Adrenal gland (tissue), 19 donors: ENCODE measurements at regions of chr10 and their contacts with region 1.

Region 1: GRCh38 chr10:77641788-77642397 is 4.3 kb upstream of the KCNMA1 start:
- DNase-seq: peak; percentile 61 to 89 (median 77)
- H3K4me3 ChIP-seq: no peak overlapping the region
- H3K27ac ChIP-seq: no peak overlapping the region
- H3K4me1 ChIP-seq: peaks cover 0 to 4% of the 10 kb centered on the region in 2 donors
- H3K27me3 ChIP-seq: peaks cover 21% of the 10 kb centered on the region
- CTCF ChIP-seq: peak; percentile 82 to 94 (median 88)
- POLR2A ChIP-seq: no peak

Region 2: DNA sequence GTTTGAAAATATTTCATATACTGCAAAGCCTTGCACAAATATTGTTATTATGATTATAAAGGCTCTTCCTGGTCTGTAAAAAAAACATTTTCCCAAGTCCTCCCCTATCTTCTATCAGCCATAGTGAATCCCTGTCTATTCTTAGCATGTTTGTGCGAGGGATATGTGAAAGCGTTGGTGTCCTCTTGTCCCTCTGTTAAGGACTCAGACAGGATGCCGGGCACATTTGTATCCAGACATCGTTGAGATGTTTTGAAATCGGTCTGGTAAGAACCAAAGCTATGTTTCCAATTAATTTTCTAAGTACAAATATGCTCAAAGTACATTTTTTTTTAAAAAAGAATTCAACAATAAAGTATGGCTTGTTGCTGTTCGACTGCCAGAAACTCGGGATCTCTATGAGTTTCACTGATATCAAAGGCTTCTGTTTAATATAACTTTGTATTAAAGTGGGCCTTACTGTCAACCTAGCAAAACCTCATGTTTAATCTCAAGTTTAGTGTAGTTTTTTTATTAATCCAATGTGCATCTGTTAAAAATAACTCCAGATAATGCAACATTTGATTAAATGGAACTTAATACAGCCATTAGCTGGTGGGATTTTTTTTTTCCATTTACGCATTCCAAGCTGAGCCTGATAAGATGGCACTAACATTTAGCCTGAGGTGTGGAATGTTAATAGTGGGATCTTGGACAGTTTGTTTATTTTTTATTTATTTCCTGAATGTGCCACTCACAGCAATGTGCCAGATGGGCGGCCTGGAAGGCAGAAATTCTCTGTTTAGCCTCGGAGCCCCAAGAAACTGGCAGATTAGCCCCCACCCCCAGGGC is 1456.2 kb before region 1 on chr10:
- intact Hi-C with region 1: no loop called
- DNase-seq: no peak
- H3K4me3 ChIP-seq: no peak overlapping the region
- H3K27ac ChIP-seq: no peak overlapping the region
- H3K4me1 ChIP-seq: peaks cover 0 to 3% of the 10 kb centered on the region in 2 donors
- H3K27me3 ChIP-seq: no peaks in the 10 kb centered on the region
- CTCF ChIP-seq: no peak
- POLR2A ChIP-seq: no peak

Region 3: DNA sequence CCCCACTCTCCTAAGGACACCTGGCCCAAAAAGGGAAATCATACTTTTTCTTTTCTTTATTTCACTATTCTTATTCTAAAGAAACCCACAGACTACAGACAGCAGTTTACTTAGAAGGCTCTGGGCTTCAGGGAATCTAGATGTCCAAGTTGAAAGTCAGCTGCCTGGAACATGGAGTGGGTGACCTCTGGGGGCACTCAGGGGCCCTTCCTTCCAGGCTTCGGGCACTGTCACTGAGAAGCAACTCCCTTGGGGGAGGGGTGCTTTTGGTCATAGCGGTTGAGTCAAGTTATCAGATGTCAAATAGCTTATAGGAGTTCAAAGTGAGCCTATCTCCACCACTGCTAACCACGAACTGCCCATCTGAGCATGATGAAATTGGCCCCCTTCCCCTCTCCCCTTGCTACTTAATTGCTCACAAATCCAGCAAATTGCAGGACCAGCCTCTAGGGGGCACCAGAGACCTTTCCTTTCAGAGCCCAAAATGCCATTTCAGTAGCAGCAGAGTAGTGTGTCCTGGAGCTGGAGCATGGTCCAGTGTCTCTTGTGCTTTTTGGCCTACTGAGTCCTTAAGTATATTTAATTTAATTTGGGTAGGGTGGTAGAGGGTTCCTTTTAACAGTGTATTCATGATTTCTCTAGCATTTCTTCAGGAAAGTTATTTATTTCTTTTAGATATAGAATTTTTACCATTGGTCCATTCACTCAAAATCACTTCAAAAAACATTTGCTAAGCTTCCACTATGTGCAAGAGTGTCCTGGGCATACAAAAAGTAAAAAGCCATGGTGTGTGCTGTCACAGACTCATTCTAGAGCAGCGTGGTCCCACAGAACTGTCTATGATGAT is 468.1 kb before region 1 on chr10:
- intact Hi-C with region 1: loop called (anchors 2 to 5 kb)
- DNase-seq: peak; percentile 55 to 93 (median 77)
- H3K4me3 ChIP-seq: no peak overlapping the region
- H3K27ac ChIP-seq: no peak overlapping the region
- H3K4me1 ChIP-seq: no peaks in the 10 kb centered on the region
- H3K27me3 ChIP-seq: no peaks in the 10 kb centered on the region
- CTCF ChIP-seq: peak; percentile 85 to 92 (median 91)
- POLR2A ChIP-seq: no peak

Region 4: DNA sequence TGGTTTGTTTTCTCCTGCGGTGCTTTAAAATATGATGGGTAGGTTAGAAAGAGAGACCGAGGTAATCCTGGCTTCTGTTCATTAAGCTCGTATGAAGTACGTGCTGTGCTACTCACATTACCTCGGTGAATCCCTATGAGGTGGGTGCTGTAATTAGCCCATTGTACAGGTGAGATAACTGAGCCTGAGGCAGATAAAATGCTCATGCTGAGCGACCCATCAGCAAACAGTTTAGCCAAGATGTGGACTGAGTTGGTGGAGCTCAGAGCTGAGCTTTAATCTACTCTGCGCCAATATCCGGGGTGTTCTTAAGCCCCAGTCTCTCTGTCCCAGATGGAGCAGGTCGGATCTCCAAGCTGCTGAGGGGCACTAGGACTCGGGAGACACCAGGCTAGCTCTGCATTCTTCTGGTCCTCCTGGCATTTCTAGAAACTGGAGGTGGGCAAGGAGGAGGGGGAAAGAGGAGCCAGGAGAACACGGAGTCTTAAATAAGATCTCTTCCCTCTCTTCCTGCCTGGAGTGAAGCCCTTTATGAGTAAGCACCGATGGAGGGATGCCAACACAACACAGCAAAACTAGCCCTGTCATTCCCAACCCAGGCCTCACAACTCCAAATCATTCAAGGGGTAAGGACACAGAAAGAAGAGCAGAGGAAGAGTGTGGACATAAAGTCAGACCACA is 462.7 kb before region 1 on chr10:
- intact Hi-C with region 1: loop called (anchors 2 to 5 kb)
- DNase-seq: peak; percentile 63 to 80 (median 77)
- H3K4me3 ChIP-seq: no peak overlapping the region
- H3K27ac ChIP-seq: no peak overlapping the region
- H3K4me1 ChIP-seq: no peaks in the 10 kb centered on the region
- H3K27me3 ChIP-seq: no peaks in the 10 kb centered on the region
- CTCF ChIP-seq: no peak
- POLR2A ChIP-seq: no peak

Region 5: DNA sequence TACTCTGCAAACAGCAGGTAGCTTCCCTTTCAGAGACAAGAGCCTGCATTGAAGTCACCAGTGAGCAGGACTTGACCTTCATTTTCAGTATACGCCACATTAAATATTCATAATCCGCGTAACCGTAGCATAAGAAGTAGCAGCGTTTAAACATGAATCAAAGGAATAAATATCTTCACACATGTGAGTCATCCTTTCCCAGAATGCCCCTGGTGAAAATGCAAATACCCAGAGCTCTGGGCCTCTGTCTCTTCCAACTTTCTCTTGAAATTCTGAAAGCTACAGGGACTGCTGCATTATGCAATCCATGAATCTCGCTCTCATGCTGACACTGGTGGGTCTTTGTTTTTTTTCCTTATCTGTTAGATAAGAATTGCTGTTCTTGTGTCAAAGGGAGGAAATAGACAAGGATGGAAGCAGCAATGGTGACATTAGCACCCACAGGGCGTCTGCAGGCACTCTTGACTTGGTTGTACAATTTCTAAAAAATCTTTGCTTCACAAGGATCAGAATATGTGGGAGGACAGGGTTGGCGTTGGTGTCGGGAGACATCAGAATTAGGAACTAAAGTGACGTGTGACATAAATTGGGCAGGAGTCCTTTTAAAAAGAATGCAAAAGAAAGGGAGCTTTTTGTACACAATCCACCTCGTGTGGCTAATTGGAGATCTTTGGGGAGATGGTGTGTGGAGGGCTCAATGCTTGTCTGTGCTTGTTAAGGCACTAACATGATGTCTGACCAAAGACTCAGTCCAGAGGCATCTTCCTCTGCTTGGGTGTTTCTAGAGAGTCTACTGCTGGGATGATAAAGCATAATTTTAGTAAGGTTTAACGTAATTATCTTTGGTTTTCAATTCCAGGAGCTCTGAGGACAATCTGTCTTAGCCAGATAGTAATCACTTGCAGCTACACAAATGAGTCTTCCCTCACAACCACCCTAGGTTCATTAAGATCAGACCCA is 394.6 kb before region 1 on chr10:
- intact Hi-C with region 1: loop called in 1 of 2 experiments (anchors 10 kb)
- DNase-seq: peak; percentile 23 to 63 (median 49)
- H3K4me3 ChIP-seq: no peak overlapping the region
- H3K27ac ChIP-seq: no peak overlapping the region
- H3K4me1 ChIP-seq: peaks cover 0 to 43% of the 10 kb centered on the region in 2 donors
- H3K27me3 ChIP-seq: no peaks in the 10 kb centered on the region
- CTCF ChIP-seq: no peak
- POLR2A ChIP-seq: no peak

Region 6: DNA sequence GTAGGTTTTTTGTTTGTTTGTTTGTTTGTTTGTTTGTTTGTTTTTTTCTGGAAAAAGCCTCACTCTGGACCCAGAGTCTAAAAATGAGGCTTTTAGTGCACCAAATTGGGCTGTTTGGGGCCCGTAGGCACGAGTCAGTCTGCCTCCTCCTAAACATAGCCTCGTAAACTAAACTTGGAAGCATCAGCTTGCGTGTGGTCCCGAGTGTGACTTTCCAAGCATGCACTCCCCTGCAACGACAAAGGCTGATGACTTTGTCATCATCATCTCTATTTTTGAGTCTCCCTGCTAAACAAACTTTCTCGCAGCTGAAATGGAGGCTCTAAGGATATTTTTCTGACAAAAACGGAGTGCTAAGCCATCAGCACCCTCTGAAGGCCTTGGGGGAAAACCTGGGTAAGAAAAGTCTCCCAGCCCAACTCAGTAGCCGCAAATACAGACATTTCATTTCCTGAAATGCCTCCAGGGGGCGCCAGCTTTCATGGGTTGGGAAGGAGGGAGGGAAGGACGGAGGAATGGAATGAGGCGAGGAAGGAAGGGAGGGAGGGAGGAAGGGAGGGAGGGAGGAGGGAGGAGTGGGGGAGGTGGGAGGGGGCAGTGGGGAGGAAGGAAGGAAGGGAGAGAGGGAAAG is 250.2 kb before region 1 on chr10:
- intact Hi-C with region 1: loop called (anchors 2 to 5 kb)
- DNase-seq: peak; percentile 69 to 87 (median 80)
- H3K4me3 ChIP-seq: no peak overlapping the region
- H3K27ac ChIP-seq: peak overlapping the region in 1 of 5 donors; percentile 47
- H3K4me1 ChIP-seq: peaks cover 0 to 7% of the 10 kb centered on the region in 2 donors
- H3K27me3 ChIP-seq: no peaks in the 10 kb centered on the region
- CTCF ChIP-seq: peak; percentile 55 to 73 (median 66)
- POLR2A ChIP-seq: no peak

Region 7: DNA sequence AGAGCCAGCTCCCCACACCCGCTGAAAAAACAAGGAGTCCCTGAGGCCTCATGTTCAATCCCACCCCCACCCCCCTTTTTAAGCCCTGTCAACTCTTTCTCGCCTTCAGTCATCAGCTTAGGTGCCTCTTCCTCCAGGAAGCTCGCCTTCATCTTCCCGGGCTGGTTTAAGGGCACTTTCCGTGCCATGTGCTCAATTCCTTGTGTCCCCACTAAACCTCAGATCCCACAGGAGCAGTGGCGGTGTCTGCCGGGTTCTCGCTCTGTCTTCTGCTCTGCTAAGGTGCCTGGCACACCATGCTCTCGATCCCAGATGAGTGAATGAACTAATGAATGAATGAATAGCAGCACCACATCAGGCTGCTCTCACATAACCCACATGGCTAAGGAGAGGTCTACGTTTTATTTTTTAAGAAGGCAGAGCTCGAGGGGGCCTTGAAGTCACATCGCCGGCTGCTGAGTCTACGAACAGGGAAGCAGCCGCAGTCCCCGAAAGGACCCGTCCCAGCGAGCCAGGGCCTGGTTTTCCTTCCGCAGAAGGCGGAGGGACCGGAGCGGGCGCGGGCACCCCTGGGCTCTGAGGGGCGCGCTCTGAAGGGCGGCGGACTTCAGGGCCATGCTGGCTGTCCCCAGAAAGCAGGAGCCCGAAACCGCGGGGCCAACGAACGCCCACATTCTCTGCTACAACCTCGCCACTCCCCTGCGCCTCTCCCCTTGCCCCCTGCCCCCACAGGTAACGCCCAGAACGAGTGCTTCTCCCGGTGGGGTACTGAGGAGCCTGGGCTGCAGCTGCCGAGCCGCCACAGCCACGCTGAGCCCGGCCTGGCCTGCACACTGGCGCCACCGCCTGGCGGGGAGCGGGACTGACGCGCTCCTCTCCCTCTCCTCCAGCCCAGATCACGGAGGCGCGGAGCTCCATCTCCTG is 69.1 kb after region 1 on chr10:
- intact Hi-C with region 1: no loop called
- DNase-seq: peak; percentile 40 to 86 (median 81)
- H3K4me3 ChIP-seq: peak overlapping the region in 2 of 4 donors; percentile 29 to 62
- H3K27ac ChIP-seq: no peak overlapping the region
- H3K4me1 ChIP-seq: peaks cover 3 to 6% of the 10 kb centered on the region in 2 donors
- H3K27me3 ChIP-seq: peaks cover 6% of the 10 kb centered on the region
- CTCF ChIP-seq: peak; percentile 76 to 98 (median 94)
- POLR2A ChIP-seq: no peak